ENCODE measurements at regions of chr15 and their contacts with region 1.

Region 1: GRCh38 chr15:38793206-38793810 is 228.7 kb upstream of the RASGRP1 start:
- DNase-seq: no peak
- ATAC-seq: no peak
- H3K4me3 ChIP-seq: no peak overlapping the region
- H3K27ac ChIP-seq: no peak overlapping the region
- H3K4me1 ChIP-seq: no peaks in the 10 kb centered on the region
- H3K27me3 ChIP-seq: no peaks in the 10 kb centered on the region
- CTCF ChIP-seq: no peak

Region 2: DNA sequence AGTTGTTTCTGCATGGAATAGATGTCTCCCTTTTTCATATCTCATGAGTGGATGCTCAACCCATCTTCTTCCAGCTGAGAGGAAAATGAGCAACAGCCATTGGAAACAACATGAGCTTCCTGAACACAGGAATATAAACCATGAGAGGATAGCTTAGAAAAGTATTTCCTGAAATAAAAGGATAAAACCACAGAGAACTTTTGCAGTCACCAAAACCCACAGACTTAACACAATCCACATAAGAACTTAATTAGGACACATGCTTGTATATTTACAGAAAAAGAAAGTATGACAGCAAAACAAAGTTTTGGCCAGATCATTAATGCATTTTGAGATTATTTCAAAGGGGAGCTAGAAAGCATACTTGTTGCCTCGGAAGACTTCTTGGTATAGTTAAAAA is 48.2 kb before region 1 on chr15:
- intact Hi-C with region 1: loop called in 1 of 10 experiments (anchors 2 kb)
- DNase-seq: no peak
- ATAC-seq: no peak
- H3K4me3 ChIP-seq: no peak overlapping the region
- H3K27ac ChIP-seq: no peak overlapping the region
- H3K4me1 ChIP-seq: no peaks in the 10 kb centered on the region
- H3K27me3 ChIP-seq: no peaks in the 10 kb centered on the region
- CTCF ChIP-seq: no peak